ENCODE measurements at regions of chr7 and their contacts with region 1.

Region 1: GRCh38 chr7:25216837-25217236 is 11.4 kb downstream of the NPVF start:
- DNase-seq: no peak
- H3K4me3 ChIP-seq: no peak overlapping the region
- H3K27ac ChIP-seq: no peak overlapping the region
- H3K4me1 ChIP-seq: peaks cover 0 to 3% (median 0%) of the 10 kb centered on the region in 4 experiments; a peak in 1 of 7 replicates
- H3K27me3 ChIP-seq: no peaks in the 10 kb centered on the region
- CTCF ChIP-seq: peak in 2 of 3 experiments; percentile 30 to 54; a peak in 2 of 4 replicates
- EP300 ChIP-seq: no peak
- POLR2A ChIP-seq: no peak
- RAD21 ChIP-seq: peak in 1 of 2 experiments; percentile 15; a peak in 2 of 4 replicates

Region 2: GRCh38 chr7:25206765-25207164 is 10.1 kb before region 1 on chr7:
- CTCF ChIA-PET with region 1: interaction called, 12 read pairs
- POLR2A ChIA-PET with region 1: no interaction called
- DNase-seq: no peak
- H3K4me3 ChIP-seq: no peak overlapping the region
- H3K27ac ChIP-seq: no peak overlapping the region
- H3K4me1 ChIP-seq: no peaks in the 10 kb centered on the region
- H3K27me3 ChIP-seq: peaks cover 0 to 1% (median 0%) of the 10 kb centered on the region in 4 experiments; a peak in 1 of 7 replicates
- CTCF ChIP-seq: no peak
- EP300 ChIP-seq: no peak
- POLR2A ChIP-seq: no peak
- RAD21 ChIP-seq: no peak

Region 3: GRCh38 chr7:25304157-25304531 is 87.3 kb after region 1 on chr7:
- CTCF ChIA-PET with region 1: no interaction called
- POLR2A ChIA-PET with region 1: no interaction called
- DNase-seq: no peak
- H3K4me3 ChIP-seq: no peak overlapping the region; a peak in 1 of 8 replicates
- H3K27ac ChIP-seq: no peak overlapping the region
- H3K4me1 ChIP-seq: peaks cover 0 to 9% (median 3%) of the 10 kb centered on the region in 4 experiments; a peak in 2 of 7 replicates
- H3K27me3 ChIP-seq: no peaks in the 10 kb centered on the region
- CTCF ChIP-seq: no peak
- EP300 ChIP-seq: no peak
- POLR2A ChIP-seq: no peak
- RAD21 ChIP-seq: no peak